ENCODE measurements at regions of chr6 and their contacts with region 1.

Region 1: DNA sequence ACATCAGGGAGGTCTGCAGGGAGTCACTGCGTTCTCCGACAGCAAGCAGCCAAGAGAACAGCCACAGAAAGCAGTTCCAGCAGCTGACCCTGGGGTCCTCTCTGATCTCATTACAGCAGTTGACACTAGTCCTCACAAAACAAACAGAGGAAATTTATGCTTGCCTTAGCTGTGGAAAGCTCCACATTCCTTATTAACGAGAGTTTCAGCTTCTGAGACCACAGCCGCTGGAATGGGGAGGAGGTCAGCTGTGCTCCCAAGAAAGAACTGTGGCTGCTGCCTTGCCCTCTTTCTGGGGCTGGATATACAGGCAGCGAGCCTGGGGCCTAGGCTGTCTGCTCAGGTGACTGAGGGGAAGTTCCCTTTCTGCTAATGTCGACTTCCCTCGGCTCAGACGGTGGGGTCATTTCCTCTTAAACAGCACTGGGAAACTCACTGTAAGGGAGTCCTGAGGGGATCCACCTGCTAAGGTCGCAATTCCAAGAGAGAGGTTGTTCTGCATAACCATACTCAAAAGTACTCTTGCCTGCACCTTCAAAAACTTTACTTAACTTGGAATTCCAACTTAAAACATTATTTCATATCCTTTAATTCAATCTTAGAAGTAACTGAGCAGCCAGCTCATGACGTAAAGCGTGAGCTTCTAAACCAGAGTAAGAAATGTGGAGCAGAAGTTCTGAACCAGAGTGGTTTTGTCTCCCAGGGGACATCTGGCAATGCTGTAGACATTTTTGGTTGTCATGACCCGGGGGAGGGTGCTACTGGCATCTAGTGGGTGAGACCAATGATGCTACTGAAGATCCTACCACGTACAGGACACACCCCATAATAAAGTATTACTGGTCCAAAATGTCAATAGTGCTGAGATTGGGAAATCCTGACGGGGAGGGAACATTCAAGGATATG is 80.3 kb downstream of the BACH2 start:
- DNase-seq: peak; percentile 70
- ATAC-seq: peak; percentile 48
- H3K4me3 Mint-ChIP-seq: peak overlapping the region; percentile 69
- H3K27ac Mint-ChIP-seq: no peak overlapping the region
- H3K4me1 Mint-ChIP-seq: peaks cover 28% of the 10 kb centered on the region
- H3K27me3 Mint-ChIP-seq: no peaks in the 10 kb centered on the region
- CTCF ChIP-seq: no peak

Region 2: GRCh38 chr6:89940225-89941027 is 275.9 kb before region 1 on chr6:
- CTCF ChIA-PET with region 1: interaction called, 16 read pairs
- POLR2A ChIA-PET with region 1: no interaction called
- intact Hi-C with region 1: no loop called
- DNase-seq: peak; percentile 85
- ATAC-seq: peak; percentile 80
- H3K4me3 Mint-ChIP-seq: no peak overlapping the region
- H3K27ac Mint-ChIP-seq: peak overlapping the region; percentile 73
- H3K4me1 Mint-ChIP-seq: peaks cover 57% of the 10 kb centered on the region
- H3K27me3 Mint-ChIP-seq: no peaks in the 10 kb centered on the region
- CTCF ChIP-seq: peak; percentile 83

Region 3: GRCh38 chr6:90162648-90163387 is 53.5 kb before region 1 on chr6:
- CTCF ChIA-PET with region 1: no interaction called
- POLR2A ChIA-PET with region 1: no interaction called
- intact Hi-C with region 1: no loop called
- DNase-seq: no peak
- ATAC-seq: peak; percentile 48
- H3K4me3 Mint-ChIP-seq: peak overlapping the region; percentile 3
- H3K27ac Mint-ChIP-seq: peak overlapping the region; percentile 75
- H3K4me1 Mint-ChIP-seq: peaks cover 56% of the 10 kb centered on the region
- H3K27me3 Mint-ChIP-seq: no peaks in the 10 kb centered on the region
- CTCF ChIP-seq: no peak

Region 4: DNA sequence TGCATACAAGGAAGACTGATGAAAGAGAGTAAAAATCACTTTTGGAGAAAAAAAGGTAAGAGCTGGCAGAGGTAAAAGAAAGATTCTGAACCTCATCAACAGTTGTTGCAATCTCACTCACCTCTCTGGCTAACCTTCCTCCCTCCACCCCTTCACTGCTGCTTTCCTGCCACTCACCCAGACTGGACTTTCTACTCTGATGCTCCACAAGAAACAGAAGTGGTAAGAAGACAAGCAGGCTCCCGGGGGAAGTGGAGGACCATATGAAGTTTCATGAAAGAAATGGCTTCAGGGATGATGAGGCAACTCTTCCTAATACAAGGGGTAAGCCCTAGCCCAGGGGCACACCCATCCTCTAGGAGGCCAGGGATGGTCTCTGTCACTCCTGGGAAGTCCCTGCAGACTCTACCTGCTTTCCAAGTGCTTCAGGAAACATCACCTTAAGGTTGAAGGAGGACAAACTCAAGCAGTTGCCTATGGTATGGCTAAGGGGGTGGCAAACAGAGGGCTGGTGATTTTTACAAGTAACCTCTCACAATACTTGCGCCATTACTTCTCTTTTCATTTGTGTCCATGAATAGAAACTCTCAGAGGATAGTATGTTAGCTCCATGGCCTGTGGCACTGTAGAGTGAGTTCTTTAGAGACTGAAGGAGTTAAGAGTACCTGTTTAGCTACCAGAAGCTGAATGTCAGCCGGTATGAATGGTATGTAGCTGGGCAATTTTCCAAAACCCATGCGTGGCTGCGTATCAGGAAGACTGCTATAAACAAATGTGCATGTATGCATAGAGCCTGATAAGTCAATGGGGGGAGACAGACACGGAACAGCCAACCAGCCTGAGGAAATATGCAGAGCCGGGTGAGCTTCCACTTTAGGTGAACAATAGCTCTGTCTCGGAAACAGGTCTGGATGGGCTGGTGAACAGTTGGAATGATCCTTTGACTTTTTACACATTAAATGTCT is 31.7 kb before region 1 on chr6:
- CTCF ChIA-PET with region 1: interaction called, 18 read pairs
- POLR2A ChIA-PET with region 1: interaction called, 16 read pairs
- intact Hi-C with region 1: no loop called
- DNase-seq: peak; percentile 36
- ATAC-seq: no peak
- H3K4me3 Mint-ChIP-seq: peak overlapping the region; percentile 56
- H3K27ac Mint-ChIP-seq: peak overlapping the region; percentile 88
- H3K4me1 Mint-ChIP-seq: peaks cover 74% of the 10 kb centered on the region
- H3K27me3 Mint-ChIP-seq: no peaks in the 10 kb centered on the region
- CTCF ChIP-seq: no peak

Region 5: GRCh38 chr6:90204327-90205056 is 11.8 kb before region 1 on chr6:
- CTCF ChIA-PET with region 1: interaction called, 52 read pairs
- POLR2A ChIA-PET with region 1: interaction called, 39 read pairs
- intact Hi-C with region 1: no loop called
- DNase-seq: no peak
- ATAC-seq: no peak
- H3K4me3 Mint-ChIP-seq: no peak overlapping the region
- H3K27ac Mint-ChIP-seq: peak overlapping the region; percentile 44
- H3K4me1 Mint-ChIP-seq: peaks cover 75% of the 10 kb centered on the region
- H3K27me3 Mint-ChIP-seq: no peaks in the 10 kb centered on the region
- CTCF ChIP-seq: no peak

Region 6: DNA sequence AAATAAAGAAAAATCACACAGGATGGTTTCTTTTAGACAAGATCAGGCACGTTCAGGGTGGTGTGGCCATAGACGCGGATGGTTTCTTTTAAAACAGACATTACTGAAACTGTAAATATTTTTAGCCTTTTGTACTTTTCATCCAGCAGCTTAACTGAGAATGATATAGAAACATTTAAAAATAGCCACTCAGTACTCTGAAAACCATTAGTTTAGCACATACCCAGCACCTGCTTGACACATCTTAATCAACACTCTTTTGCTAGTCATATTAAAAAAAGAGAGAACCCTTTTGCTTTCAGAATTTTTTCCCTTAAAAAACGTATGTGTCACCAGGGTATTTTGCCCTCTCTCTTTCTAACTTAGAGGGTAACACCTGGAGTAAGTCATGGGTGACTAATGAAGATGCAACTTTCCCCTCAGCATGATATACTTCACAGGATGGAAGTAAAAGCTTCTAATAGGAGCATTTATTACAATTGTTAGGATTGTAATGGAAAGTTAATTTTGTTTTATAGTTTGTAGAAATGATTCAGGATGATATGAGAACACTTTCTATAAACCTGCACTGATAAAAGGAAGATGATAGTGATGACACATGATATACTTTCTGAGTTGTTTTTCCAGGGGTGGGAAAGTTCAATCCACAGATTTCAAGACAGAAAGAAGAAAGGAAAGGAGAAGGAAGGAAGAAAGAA is 35.1 kb after region 1 on chr6:
- CTCF ChIA-PET with region 1: interaction called, 5 read pairs
- POLR2A ChIA-PET with region 1: interaction called, 27 read pairs
- intact Hi-C with region 1: loop called (anchors 5 kb)
- DNase-seq: no peak
- ATAC-seq: peak; percentile 59
- H3K4me3 Mint-ChIP-seq: peak overlapping the region; percentile 58
- H3K27ac Mint-ChIP-seq: peak overlapping the region; percentile 90
- H3K4me1 Mint-ChIP-seq: peaks cover 86% of the 10 kb centered on the region
- H3K27me3 Mint-ChIP-seq: no peaks in the 10 kb centered on the region
- CTCF ChIP-seq: no peak

Region 7: GRCh38 chr6:90296346-90297114 is 80.2 kb after region 1 on chr6 and contains the start of gene BACH2:
- CTCF ChIA-PET with region 1: interaction called, 3 read pairs
- POLR2A ChIA-PET with region 1: interaction called, 21 read pairs
- intact Hi-C with region 1: no loop called
- DNase-seq: peak; percentile 99
- ATAC-seq: peak; percentile 69
- H3K4me3 Mint-ChIP-seq: peak within 1 kb of the TSS; percentile 83
- H3K27ac Mint-ChIP-seq: peak within 1 kb of the TSS; percentile 94
- H3K4me1 Mint-ChIP-seq: peaks cover 38% of the 10 kb centered on the region
- H3K27me3 Mint-ChIP-seq: peaks cover 3% of the 10 kb centered on the region
- CTCF ChIP-seq: no peak
- total RNA-seq, gene BACH2: 60.7 to 66.9 TPM

Region 8: DNA sequence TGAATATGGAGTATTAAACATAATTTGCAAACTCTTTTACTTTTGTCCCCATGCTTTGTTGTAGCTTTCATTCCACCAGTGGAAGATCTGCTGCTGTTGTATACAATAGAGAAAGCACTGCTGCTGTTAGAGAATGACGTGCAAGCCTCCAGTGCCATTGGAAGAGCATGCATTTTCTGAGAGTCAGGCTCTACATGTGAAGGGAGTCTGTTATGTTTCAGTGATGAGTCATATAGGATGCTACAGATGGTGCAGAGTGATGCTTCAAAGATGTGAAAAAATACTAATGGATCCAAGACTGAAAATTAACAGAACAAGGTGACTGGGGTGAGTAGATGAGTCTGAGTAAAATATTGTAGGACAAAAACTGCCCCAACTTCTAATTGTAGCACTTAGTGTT is 102.7 kb after region 1 on chr6:
- CTCF ChIA-PET with region 1: no interaction called
- POLR2A ChIA-PET with region 1: no interaction called
- intact Hi-C with region 1: no loop called
- DNase-seq: peak; percentile 23
- ATAC-seq: peak; percentile 82
- H3K4me3 Mint-ChIP-seq: no peak overlapping the region
- H3K27ac Mint-ChIP-seq: peak overlapping the region; percentile 37
- H3K4me1 Mint-ChIP-seq: peaks cover 32% of the 10 kb centered on the region
- H3K27me3 Mint-ChIP-seq: no peaks in the 10 kb centered on the region
- CTCF ChIP-seq: no peak

Measured in activated CD8-positive, alpha-beta T cell treated with anti-CD3 and anti-CD28 coated beads for 36 hours (primary cell).